Activated naive CD4-positive, alpha-beta T cell treated with anti-CD3 and anti-CD28 coated beads for 36 hours (primary cell): ENCODE measurements at regions of chr14 and their contacts with region 1.

Region 1: GRCh38 chr14:20613094-20614037 is 22.2 kb upstream of the RNASE12 start:
- DNase-seq: peak; percentile 92
- H3K4me3 Mint-ChIP-seq: no peak overlapping the region
- H3K27ac Mint-ChIP-seq: no peak overlapping the region
- H3K4me1 Mint-ChIP-seq: peaks cover 10% of the 10 kb centered on the region
- H3K27me3 Mint-ChIP-seq: no peaks in the 10 kb centered on the region

Region 2: GRCh38 chr14:20327005-20327869 is 286.1 kb before region 1 on chr14:
- CTCF ChIA-PET with region 1: interaction called, 48 read pairs
- intact Hi-C with region 1: loop called (anchors 1 kb)
- DNase-seq: peak; percentile 38
- H3K4me3 Mint-ChIP-seq: no peak overlapping the region
- H3K27ac Mint-ChIP-seq: peak overlapping the region; percentile 57
- H3K4me1 Mint-ChIP-seq: peaks cover 45% of the 10 kb centered on the region
- H3K27me3 Mint-ChIP-seq: no peaks in the 10 kb centered on the region

Region 3: GRCh38 chr14:20454516-20455354 is 158.6 kb before region 1 on chr14 and contains the starts of genes APEX1 and OSGEP:
- CTCF ChIA-PET with region 1: interaction called, 3 read pairs
- intact Hi-C with region 1: loop called (anchors 1 kb)
- DNase-seq: peak; percentile 99
- H3K4me3 Mint-ChIP-seq: peak within 1 kb of the TSS; percentile 52
- H3K27ac Mint-ChIP-seq: no peak within 1 kb of the TSS
- H3K4me1 Mint-ChIP-seq: peaks cover 31% of the 10 kb centered on the region
- H3K27me3 Mint-ChIP-seq: no peaks in the 10 kb centered on the region
- total RNA-seq, gene APEX1: 187 to 190 TPM
- total RNA-seq, gene OSGEP: 35.7 to 36.8 TPM

Region 4: GRCh38 chr14:20601482-20602080 is 11.8 kb before region 1 on chr14:
- CTCF ChIA-PET with region 1: interaction called, 13 read pairs
- intact Hi-C with region 1: no loop called
- DNase-seq: no peak
- H3K4me3 Mint-ChIP-seq: no peak overlapping the region
- H3K27ac Mint-ChIP-seq: no peak overlapping the region
- H3K4me1 Mint-ChIP-seq: no peaks in the 10 kb centered on the region
- H3K27me3 Mint-ChIP-seq: no peaks in the 10 kb centered on the region

Region 5: GRCh38 chr14:20662968-20663732 is 49.8 kb after region 1 on chr14:
- CTCF ChIA-PET with region 1: interaction called, 6 read pairs
- intact Hi-C with region 1: loop called (anchors 1 kb)
- DNase-seq: peak; percentile 94
- H3K4me3 Mint-ChIP-seq: peak overlapping the region; percentile 83
- H3K27ac Mint-ChIP-seq: peak overlapping the region; percentile 79
- H3K4me1 Mint-ChIP-seq: peaks cover 16% of the 10 kb centered on the region
- H3K27me3 Mint-ChIP-seq: peaks cover 8% of the 10 kb centered on the region

Region 6: GRCh38 chr14:20855652-20856291 is 242.4 kb after region 1 on chr14:
- CTCF ChIA-PET with region 1: interaction called, 3 read pairs
- intact Hi-C with region 1: loop called (anchors 1 kb)
- DNase-seq: peak; percentile 62
- H3K4me3 Mint-ChIP-seq: no peak overlapping the region
- H3K27ac Mint-ChIP-seq: no peak overlapping the region
- H3K4me1 Mint-ChIP-seq: no peaks in the 10 kb centered on the region
- H3K27me3 Mint-ChIP-seq: no peaks in the 10 kb centered on the region

Region 7: GRCh38 chr14:21109377-21110260 is 496.3 kb after region 1 on chr14:
- CTCF ChIA-PET with region 1: no interaction called
- intact Hi-C with region 1: no loop called
- DNase-seq: peak; percentile 71
- H3K4me3 Mint-ChIP-seq: no peak overlapping the region
- H3K27ac Mint-ChIP-seq: peak overlapping the region; percentile 7
- H3K4me1 Mint-ChIP-seq: peaks cover 20% of the 10 kb centered on the region
- H3K27me3 Mint-ChIP-seq: no peaks in the 10 kb centered on the region